ENCODE measurements at regions of chr5 and their contacts with region 1.

Region 1: GRCh38 chr5:140564196-140565023 is at the starts of genes APBB3 and SLC35A4:
- DNase-seq: peak; percentile 99
- ATAC-seq: peak; percentile 89
- H3K4me3 ChIP-seq: peak within 1 kb of the TSS; percentile 71 to 95 (median 91)
- H3K4me3 Mint-ChIP-seq: peak within 1 kb of the TSS; percentile 90
- H3K27ac ChIP-seq: peak within 1 kb of the TSS; percentile 91 to 92
- H3K27ac Mint-ChIP-seq: peak within 1 kb of the TSS; percentile 97
- H3K4me1 ChIP-seq: peaks cover 25 to 36% of the 10 kb centered on the region in 2 donors
- H3K4me1 Mint-ChIP-seq: peaks cover 48% of the 10 kb centered on the region
- H3K27me3 ChIP-seq: no peaks in the 10 kb centered on the region
- H3K27me3 Mint-ChIP-seq: no peaks in the 10 kb centered on the region
- CTCF ChIP-seq: no peak
- total RNA-seq, gene APBB3: 73.9 and 79.7 TPM in 2 replicates
- total RNA-seq, gene SLC35A4: 44.0 and 48.6 TPM in 2 replicates

Region 2: GRCh38 chr5:140547508-140548299 is 16.7 kb before region 1 on chr5 and contains the start of gene EIF4EBP3:
- CTCF ChIA-PET with region 1: interaction called, 18 read pairs
- POLR2A ChIA-PET with region 1: interaction called, 15 read pairs
- intact Hi-C with region 1: loop called (anchors 1 kb)
- DNase-seq: peak; percentile 91
- ATAC-seq: peak; percentile 97
- H3K4me3 ChIP-seq: peak within 1 kb of the TSS; percentile 35 to 93 (median 79)
- H3K4me3 Mint-ChIP-seq: peak within 1 kb of the TSS; percentile 94
- H3K27ac ChIP-seq: peak within 1 kb of the TSS; percentile 81 to 85
- H3K27ac Mint-ChIP-seq: peak within 1 kb of the TSS; percentile 94
- H3K4me1 ChIP-seq: peaks cover 10 to 30% of the 10 kb centered on the region in 2 donors
- H3K4me1 Mint-ChIP-seq: peaks cover 30% of the 10 kb centered on the region
- H3K27me3 ChIP-seq: no peaks in the 10 kb centered on the region
- H3K27me3 Mint-ChIP-seq: no peaks in the 10 kb centered on the region
- CTCF ChIP-seq: peak; percentile 77
- total RNA-seq, gene EIF4EBP3: 8.8 and 15.0 TPM in 2 replicates

Region 3: GRCh38 chr5:140664359-140665119 is 100.1 kb after region 1 on chr5 and contains the start of gene WDR55:
- CTCF ChIA-PET with region 1: no interaction called
- POLR2A ChIA-PET with region 1: no interaction called
- intact Hi-C with region 1: loop called (anchors 1 kb)
- DNase-seq: peak; percentile 94
- ATAC-seq: peak; percentile 97
- H3K4me3 ChIP-seq: peak within 1 kb of the TSS; percentile 56 to 99 (median 98)
- H3K4me3 Mint-ChIP-seq: peak within 1 kb of the TSS; percentile 99
- H3K27ac ChIP-seq: peak within 1 kb of the TSS; percentile 74 to 88
- H3K27ac Mint-ChIP-seq: peak within 1 kb of the TSS; percentile 98
- H3K4me1 ChIP-seq: peaks cover 14 to 17% of the 10 kb centered on the region in 2 donors
- H3K4me1 Mint-ChIP-seq: peaks cover 30% of the 10 kb centered on the region
- H3K27me3 ChIP-seq: no peaks in the 10 kb centered on the region
- H3K27me3 Mint-ChIP-seq: no peaks in the 10 kb centered on the region
- CTCF ChIP-seq: no peak
- total RNA-seq, gene WDR55: 44.7 and 46.2 TPM in 2 replicates

Region 4: DNA sequence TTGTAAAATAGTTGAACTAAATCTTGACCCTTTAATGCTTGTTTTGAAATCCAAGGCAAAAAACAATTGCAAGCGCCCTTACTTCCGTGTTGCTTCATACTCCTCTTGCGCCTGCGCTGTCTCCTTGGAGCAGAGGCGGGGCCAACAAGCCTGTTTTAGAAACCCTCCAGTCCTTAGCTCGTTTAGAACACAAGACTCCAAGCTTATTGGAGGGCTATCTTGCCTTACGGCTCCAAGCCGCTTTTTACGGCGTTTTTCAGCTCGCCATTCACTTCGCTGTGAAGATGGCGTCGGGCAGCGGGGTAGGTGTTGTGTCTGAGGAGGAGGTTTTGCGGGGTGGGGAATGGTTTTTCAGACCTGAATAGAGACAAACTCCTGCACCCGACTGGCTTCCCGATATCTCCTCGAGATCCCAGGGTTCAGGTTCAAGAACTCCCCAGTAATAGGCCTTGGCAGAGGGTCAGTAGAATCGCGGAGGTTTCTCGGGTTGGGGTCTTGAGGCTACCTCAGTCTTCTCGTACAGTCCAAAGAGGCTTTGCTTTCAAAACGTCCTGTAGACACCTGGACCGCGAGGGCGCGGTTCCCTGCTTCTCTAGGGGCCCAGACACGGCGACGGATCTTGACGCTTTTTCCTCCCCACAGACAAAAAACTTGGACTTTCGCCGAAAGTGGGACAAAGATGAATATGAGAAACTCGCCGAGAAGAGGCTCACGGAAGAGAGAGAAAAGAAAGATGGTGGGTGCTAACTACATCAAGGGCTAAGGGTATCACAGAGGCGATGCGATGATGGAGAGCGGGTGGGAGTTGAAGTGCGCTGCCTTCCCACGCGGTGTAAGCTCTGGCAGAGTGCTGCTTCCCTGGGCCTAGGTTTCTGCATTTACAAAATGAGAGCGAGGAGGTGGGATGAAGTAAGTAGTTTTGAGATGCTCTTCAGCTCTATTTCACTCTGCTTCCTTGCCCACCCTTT is 136.1 kb after region 1 on chr5 and contains the start of gene ZMAT2:
- CTCF ChIA-PET with region 1: no interaction called
- POLR2A ChIA-PET with region 1: no interaction called
- intact Hi-C with region 1: loop called (anchors 1 kb)
- DNase-seq: peak; percentile 96
- ATAC-seq: peak; percentile 99
- H3K4me3 ChIP-seq: peak within 1 kb of the TSS; percentile 58 to 97 (median 92)
- H3K4me3 Mint-ChIP-seq: peak within 1 kb of the TSS; percentile 96
- H3K27ac ChIP-seq: peak within 1 kb of the TSS; percentile 46 to 77
- H3K27ac Mint-ChIP-seq: peak within 1 kb of the TSS; percentile 91
- H3K4me1 ChIP-seq: peaks cover 13 to 16% of the 10 kb centered on the region in 2 donors
- H3K4me1 Mint-ChIP-seq: peaks cover 23% of the 10 kb centered on the region
- H3K27me3 ChIP-seq: no peaks in the 10 kb centered on the region
- H3K27me3 Mint-ChIP-seq: no peaks in the 10 kb centered on the region
- CTCF ChIP-seq: no peak
- total RNA-seq, gene ZMAT2: 55.7 and 55.8 TPM in 2 replicates

Measured in B cell (primary cell).